ENCODE measurements at regions of chr1 and their contacts with region 1.

Region 1: DNA sequence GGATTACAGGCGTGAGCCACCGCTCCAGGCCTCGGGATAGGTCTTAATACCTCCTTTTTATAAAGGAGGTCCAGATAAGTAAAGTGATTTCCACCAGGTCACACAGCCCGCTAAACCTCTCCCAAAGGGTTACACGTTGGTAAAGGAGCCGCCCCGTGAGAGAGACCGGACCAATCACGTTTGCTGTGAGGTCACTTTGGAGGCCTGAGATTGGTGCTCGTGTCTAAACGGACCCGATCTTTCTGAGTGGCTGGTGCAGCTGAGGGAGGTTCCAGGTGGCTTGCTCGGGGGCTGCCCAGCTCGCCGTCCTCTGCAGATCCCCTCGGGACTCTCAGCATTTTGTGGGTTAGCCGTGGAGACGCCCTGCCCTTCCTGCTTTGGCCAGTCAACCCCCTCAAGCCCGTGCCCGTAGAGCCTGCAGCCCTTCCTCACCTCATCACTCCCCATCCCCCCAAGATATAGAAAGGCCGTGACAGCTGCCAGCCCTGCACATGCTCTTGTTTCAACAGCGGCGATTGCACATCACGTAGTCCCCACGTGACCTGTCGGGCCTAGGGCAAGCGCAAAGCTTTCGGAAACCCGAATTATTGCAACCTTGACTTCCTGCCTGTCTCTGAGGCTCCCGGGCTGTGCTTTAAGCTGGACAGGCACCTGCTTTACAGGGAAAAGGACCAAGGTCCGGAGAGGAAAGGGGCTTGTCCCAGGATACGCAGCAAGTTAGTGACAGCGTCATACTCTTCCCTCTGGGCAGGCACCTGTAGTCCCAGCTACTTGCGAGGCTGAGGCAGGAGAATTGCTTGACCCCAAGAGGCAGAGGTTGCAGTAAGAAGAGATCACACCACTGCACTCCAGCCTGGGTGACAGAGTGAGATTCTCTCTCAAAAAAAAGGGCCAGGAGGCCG is 5.0 kb upstream of the COA7 start:
- DNase-seq: peak; percentile 78
- H3K4me3 ChIP-seq: peak overlapping the region; percentile 33
- H3K27ac ChIP-seq: no peak overlapping the region
- H3K4me1 ChIP-seq: peaks cover 4% of the 10 kb centered on the region
- H3K27me3 ChIP-seq: no peaks in the 10 kb centered on the region
- CTCF ChIP-seq: no peak

Region 2: GRCh38 chr1:52970149-52970548 is 267.0 kb after region 1 on chr1:
- CTCF ChIA-PET with region 1: no interaction called
- POLR2A ChIA-PET with region 1: no interaction called
- intact Hi-C with region 1: loop called (anchors 10 kb)
- DNase-seq: peak; percentile 40
- H3K4me3 ChIP-seq: no peak overlapping the region
- H3K27ac ChIP-seq: no peak overlapping the region
- H3K4me1 ChIP-seq: no peaks in the 10 kb centered on the region
- H3K27me3 ChIP-seq: no peaks in the 10 kb centered on the region
- CTCF ChIP-seq: peak; percentile 57

Region 3: DNA sequence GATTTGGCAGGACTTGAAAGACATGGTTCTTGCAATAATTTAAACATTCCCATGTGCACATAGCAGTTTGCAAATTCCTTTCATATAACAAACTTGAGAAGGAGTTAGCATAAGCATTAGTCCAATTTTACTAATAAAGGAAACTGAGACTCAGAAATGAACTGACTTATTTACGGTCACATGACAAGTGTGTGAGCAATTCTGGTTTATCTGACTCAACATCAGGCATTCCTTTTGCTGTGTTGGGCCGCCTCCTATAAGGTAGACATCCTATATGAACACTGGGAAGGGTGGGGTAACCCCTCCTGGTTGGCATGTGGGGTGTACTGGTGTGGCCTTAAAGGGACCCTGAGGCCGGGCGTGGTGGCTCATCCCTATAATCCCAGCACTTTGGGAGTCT is 485.0 kb after region 1 on chr1:
- CTCF ChIA-PET with region 1: no interaction called
- POLR2A ChIA-PET with region 1: no interaction called
- intact Hi-C with region 1: loop called (anchors 5 kb)
- DNase-seq: no peak
- H3K4me3 ChIP-seq: no peak overlapping the region
- H3K27ac ChIP-seq: no peak overlapping the region
- H3K4me1 ChIP-seq: no peaks in the 10 kb centered on the region
- H3K27me3 ChIP-seq: no peaks in the 10 kb centered on the region
- CTCF ChIP-seq: no peak